ENCODE measurements at regions of chr17 and their contacts with region 1.

Region 1: GRCh38 chr17:44344939-44345453 is at the start of gene GRN:
- DNase-seq: peak; percentile 98
- H3K4me3 ChIP-seq: peak within 1 kb of the TSS; percentile 79 to 87 (median 86)
- H3K27ac ChIP-seq: peak within 1 kb of the TSS; percentile 67
- H3K4me1 ChIP-seq: peaks cover 34% of the 10 kb centered on the region
- H3K27me3 ChIP-seq: no peaks in the 10 kb centered on the region
- CTCF ChIP-seq: no peak
- total RNA-seq, gene GRN: 288 to 394 TPM

Region 2: DNA sequence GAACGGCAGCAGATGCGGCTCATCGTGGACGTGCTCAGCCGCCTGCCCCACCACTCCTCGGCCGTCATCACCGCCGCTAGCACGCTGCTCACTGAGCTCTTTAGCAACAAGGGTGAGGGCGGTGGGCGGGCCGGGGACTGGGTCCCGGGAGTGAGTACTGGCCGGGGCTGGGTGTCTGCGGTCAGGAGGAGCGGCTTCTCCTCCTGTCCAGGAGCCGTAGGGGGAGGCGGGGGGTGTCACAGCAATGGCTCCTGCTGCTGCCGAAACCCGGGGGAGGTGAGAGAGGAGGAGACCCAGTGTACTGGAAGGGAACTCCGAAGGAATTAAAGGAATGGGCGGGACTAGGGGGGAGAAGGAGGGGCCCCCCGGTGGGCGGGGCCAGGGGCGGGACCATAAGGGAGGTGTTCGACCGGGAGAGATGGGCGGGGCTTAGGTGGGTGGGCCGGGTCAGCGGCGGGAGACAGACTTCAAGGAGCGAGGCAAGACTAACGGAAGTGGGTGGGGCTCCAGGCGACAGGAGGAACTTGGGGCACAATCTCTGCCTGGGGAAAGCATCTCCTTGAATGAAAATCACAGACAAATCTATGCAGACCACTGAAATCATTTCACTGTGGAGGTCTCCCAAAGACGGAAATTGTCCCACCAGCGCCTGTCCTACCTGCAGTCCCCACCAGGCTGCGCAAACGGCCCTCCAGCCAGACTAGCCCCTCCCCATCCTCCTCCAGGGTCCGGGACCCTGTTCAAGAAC is 338.2 kb before region 1 on chr17:
- CTCF ChIA-PET with region 1: no interaction called
- dilution Hi-C with region 1: no loop called
- in situ Hi-C with region 1: no loop called
- intact Hi-C with region 1: loop called (anchors 5 kb)
- DNase-seq: peak; percentile 97
- H3K4me3 ChIP-seq: peak overlapping the region; percentile 48 to 71 (median 63)
- H3K27ac ChIP-seq: peak overlapping the region; percentile 59
- H3K4me1 ChIP-seq: peaks cover 41% of the 10 kb centered on the region
- H3K27me3 ChIP-seq: no peaks in the 10 kb centered on the region
- CTCF ChIP-seq: peak; percentile 55 to 68

Region 3: DNA sequence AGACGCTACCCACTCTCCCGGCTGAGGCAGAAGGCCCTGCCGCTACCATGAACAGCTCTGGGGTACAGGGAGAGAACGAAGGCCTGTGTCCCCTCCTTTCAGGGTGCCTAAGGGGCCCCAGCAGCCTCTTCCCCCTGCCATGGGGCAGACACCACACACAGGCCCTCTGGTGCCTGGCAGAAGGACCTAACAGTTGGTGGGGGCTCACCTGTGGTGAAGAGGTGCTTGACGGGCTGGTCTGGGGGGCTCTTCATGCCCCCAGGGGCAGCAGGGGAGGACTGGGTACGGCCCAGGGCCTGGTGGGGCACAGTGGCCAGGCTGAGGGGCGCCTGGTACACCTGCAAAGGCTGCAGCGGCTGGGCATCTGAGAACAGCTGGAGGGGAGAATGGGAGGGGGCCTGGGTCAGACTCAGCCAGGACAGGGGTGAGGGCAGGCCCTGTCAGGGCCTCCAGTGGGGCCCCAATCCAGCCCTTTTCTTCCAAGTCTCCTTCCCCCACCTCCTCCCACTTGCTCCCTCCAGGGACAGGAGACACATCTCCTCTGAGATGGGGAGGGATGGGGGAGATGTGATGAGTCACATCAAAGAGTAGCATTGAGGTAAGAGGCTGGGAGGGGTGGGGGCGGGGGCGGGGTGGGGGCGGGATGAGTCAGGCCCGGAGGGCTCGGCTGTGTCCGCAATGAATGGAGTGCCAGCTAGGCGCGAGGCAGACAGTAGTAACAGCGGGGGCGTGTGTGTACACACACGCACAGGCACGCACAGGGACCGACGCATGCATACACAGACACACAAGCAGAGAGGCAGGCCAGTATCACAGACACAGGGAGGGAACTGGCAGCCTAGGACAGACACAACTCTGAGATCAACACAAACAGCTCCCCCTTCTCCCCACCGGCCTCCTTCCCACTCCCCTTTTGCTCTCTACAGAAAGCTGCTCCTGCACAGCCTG is 258.4 kb before region 1 on chr17:
- CTCF ChIA-PET with region 1: interaction called, 5 read pairs
- dilution Hi-C with region 1: no loop called
- in situ Hi-C with region 1: no loop called
- intact Hi-C with region 1: loop called (anchors 5 kb)
- DNase-seq: peak; percentile 88
- H3K4me3 ChIP-seq: no peak overlapping the region
- H3K27ac ChIP-seq: peak overlapping the region; percentile 56
- H3K4me1 ChIP-seq: peaks cover 27% of the 10 kb centered on the region
- H3K27me3 ChIP-seq: no peaks in the 10 kb centered on the region
- CTCF ChIP-seq: no peak

Region 4: DNA sequence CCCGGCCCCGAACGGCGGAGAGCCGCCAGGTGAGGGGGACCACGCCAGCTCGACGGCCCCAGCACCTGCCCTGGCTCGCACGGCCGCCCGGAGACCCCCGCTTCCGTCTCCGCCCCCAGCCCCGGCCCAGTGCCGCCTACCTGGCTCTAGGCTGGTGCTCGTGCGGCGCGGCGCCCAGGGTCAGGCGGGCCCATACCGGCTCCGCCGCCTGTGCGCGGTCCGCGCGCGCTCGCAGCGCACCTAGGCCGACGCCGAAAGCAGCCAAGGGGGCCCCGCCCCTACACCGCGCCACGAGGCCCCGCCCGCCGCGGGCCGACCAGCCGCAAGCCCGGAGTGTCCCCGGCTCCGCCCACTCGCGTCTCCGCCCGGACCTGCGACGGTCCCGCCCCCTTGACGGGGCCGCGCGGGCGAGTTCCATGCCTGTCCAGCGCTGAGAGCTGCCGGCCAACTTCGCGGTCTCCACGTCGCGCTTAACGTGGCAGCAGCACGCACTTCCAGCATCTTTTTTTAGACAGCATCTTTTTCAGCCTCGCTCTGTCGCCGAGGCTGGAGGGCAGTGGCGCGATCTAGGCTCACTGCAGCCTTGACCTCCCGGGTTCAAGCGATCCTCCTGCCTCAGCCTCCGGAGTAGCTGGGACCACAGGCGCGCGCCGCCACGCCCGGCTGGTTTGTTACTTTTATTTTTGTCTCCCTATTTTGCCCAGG is 20.3 kb before region 1 on chr17 and contains the start of gene SLC25A39:
- CTCF ChIA-PET with region 1: interaction called, 3 read pairs
- dilution Hi-C with region 1: no loop called
- in situ Hi-C with region 1: no loop called
- intact Hi-C with region 1: loop called (anchors 1 kb)
- DNase-seq: peak; percentile 92
- H3K4me3 ChIP-seq: peak within 1 kb of the TSS; percentile 77 to 85 (median 83)
- H3K27ac ChIP-seq: peak within 1 kb of the TSS; percentile 73
- H3K4me1 ChIP-seq: peaks cover 8% of the 10 kb centered on the region
- H3K27me3 ChIP-seq: no peaks in the 10 kb centered on the region
- CTCF ChIP-seq: no peak
- total RNA-seq, gene SLC25A39: 116 to 169 TPM

Region 5: GRCh38 chr17:44363613-44364159 is 18.7 kb after region 1 on chr17 and contains the start of gene FAM171A2:
- CTCF ChIA-PET with region 1: no interaction called
- dilution Hi-C with region 1: no loop called
- in situ Hi-C with region 1: no loop called
- intact Hi-C with region 1: no loop called
- DNase-seq: peak; percentile 23
- H3K4me3 ChIP-seq: peak within 1 kb of the TSS; percentile 51 to 83 (median 58)
- H3K27ac ChIP-seq: no peak within 1 kb of the TSS
- H3K4me1 ChIP-seq: no peaks in the 10 kb centered on the region
- H3K27me3 ChIP-seq: no peaks in the 10 kb centered on the region
- CTCF ChIP-seq: peak; percentile 22 to 53
- total RNA-seq, gene FAM171A2: 2.0 to 4.0 TPM